ENCODE measurements at regions of chr6 and their contacts with region 1.

Region 1: DNA sequence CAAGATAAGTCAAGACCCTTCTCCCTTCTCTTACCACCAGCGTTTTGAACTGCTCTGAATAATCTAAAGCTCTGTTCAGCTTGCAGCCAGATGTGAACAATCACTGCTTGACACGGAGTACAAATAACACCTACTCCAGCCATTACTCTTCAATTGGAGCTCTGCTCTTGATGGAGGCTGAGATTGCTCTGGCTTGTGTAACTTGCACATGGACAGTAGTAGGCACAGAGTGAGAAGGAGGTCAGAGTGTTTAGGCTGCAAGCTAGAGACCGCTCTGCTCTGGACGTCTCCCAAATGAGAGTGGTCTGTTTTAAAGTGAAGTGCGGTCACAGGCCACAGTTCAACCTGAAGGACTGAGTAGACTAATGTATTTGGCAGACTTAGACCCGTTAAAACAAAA is 158.3 kb downstream of the HDGFL1 start:
- DNase-seq: no peak
- ATAC-seq: no peak
- H3K4me3 ChIP-seq: no peak overlapping the region
- H3K27ac ChIP-seq: no peak overlapping the region
- H3K4me1 ChIP-seq: no peaks in the 10 kb centered on the region
- H3K27me3 ChIP-seq: no peaks in the 10 kb centered on the region
- CTCF ChIP-seq: no peak

Region 2: DNA sequence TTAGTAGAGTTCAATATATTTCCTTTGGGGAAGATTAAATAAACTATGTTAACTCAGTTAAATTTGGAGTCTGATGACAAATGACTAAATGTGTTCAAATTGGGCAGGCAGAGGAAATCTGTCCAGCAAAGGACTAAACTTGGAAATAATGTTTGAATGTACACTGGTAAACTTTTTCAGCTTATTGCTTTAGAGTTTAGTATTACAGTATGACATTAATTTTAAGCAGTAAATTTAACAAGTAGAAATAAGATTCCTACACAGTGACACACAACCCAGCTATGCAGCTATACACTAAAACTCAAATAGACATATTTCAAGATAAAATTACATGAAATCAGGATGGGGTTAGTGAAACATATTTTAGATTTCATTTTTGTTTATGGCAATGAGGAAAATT is 201.0 kb before region 1 on chr6:
- CTCF ChIA-PET with region 1: no interaction called
- POLR2A ChIA-PET with region 1: no interaction called
- intact Hi-C with region 1: loop called (anchors 5 kb)
- DNase-seq: peak; percentile 45
- ATAC-seq: peak; percentile 97
- H3K4me3 ChIP-seq: no peak overlapping the region
- H3K27ac ChIP-seq: no peak overlapping the region
- H3K4me1 ChIP-seq: peaks cover 20% of the 10 kb centered on the region; the same call in 1 of the 2 replicates
- H3K27me3 ChIP-seq: no peaks in the 10 kb centered on the region
- CTCF ChIP-seq: no peak

Region 3: GRCh38 chr6:22558334-22558747 is 169.4 kb before region 1 on chr6:
- CTCF ChIA-PET with region 1: no interaction called
- POLR2A ChIA-PET with region 1: no interaction called
- intact Hi-C with region 1: loop called (anchors 5 kb)
- DNase-seq: peak; percentile 93
- ATAC-seq: peak; percentile 95
- H3K4me3 ChIP-seq: no peak overlapping the region
- H3K27ac ChIP-seq: peak overlapping the region; percentile 74
- H3K4me1 ChIP-seq: peaks cover 21% of the 10 kb centered on the region
- H3K27me3 ChIP-seq: no peaks in the 10 kb centered on the region
- CTCF ChIP-seq: no peak

Region 4: DNA sequence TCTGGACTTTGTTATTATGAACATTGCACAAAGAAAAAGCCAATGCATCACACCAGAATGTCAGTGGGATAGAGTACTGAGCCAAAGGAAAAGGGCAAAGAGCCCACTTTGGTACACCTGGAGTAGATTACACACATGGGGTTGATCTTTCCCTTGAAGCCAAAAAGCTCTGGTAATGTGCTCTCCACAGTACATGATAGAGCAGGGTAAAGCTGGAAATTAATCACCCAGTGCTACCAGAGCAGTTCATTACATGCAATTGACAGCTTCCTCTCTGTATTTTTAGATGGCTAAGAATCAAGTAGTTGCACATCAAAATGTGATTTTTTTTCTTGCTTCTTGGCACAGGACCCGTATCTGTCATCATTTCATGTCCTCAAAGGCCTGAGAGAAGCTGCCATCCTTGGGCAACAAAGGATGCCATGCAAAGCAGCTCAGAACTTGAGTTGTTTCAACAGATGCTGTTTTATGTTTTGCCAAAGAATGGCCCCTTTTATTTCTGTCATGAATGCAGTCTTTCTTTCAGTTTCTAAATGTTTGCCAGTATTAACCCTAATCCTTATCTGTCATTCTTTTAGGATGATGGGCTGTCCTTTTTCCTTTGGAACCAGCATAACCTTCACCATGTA is 70.2 kb before region 1 on chr6:
- CTCF ChIA-PET with region 1: no interaction called
- POLR2A ChIA-PET with region 1: no interaction called
- intact Hi-C with region 1: no loop called
- DNase-seq: no peak
- ATAC-seq: no peak
- H3K4me3 ChIP-seq: no peak overlapping the region
- H3K27ac ChIP-seq: no peak overlapping the region
- H3K4me1 ChIP-seq: peaks cover 18% of the 10 kb centered on the region
- H3K27me3 ChIP-seq: no peaks in the 10 kb centered on the region
- CTCF ChIP-seq: no peak

Region 5: DNA sequence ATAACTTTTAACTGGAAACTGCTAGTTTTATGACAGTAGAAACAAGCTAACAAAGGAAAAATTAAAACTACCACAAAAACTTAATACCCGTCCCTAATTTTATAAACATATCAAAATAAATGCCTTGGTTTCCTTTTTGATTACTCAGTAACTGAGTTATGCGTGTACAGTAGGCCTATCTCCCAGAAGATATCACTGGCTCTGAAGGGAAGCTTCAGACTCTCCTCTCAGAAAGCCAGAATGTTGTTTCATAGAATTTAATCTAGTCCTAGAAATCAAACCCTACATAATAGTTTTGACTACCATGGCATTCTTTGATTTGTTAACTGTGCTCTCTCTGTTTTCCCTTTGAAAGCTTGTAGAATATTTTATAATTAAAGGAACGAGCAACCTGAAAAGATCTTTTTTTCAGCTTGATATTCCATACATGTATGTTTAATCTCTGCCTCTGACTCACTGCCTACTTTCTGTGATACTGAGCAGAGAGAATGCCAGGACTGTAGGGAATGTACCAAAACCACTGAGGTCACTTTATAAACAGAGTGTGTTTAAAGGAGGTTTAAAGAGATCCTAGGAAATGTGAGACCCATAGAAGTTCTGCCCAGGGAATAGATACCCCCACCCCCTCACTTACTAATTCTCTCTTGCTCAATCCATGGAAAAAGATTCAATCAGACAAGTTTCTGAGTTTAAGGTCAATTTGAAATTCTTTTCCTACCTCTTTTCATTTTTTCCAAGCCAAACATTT is 153.2 kb after region 1 on chr6:
- CTCF ChIA-PET with region 1: no interaction called
- POLR2A ChIA-PET with region 1: no interaction called
- intact Hi-C with region 1: loop called (anchors 10 kb)
- DNase-seq: peak; percentile 93
- ATAC-seq: peak; percentile 100
- H3K4me3 ChIP-seq: peak overlapping the region; percentile 19; the same call in 1 of the 2 replicates
- H3K27ac ChIP-seq: peak overlapping the region; percentile 82
- H3K4me1 ChIP-seq: peaks cover 19% of the 10 kb centered on the region
- H3K27me3 ChIP-seq: no peaks in the 10 kb centered on the region
- CTCF ChIP-seq: no peak

Measured in PC-3 (cell line).